Caki2 (cell line): ENCODE measurements at regions of chr17 and their contacts with region 1.

Region 1: DNA sequence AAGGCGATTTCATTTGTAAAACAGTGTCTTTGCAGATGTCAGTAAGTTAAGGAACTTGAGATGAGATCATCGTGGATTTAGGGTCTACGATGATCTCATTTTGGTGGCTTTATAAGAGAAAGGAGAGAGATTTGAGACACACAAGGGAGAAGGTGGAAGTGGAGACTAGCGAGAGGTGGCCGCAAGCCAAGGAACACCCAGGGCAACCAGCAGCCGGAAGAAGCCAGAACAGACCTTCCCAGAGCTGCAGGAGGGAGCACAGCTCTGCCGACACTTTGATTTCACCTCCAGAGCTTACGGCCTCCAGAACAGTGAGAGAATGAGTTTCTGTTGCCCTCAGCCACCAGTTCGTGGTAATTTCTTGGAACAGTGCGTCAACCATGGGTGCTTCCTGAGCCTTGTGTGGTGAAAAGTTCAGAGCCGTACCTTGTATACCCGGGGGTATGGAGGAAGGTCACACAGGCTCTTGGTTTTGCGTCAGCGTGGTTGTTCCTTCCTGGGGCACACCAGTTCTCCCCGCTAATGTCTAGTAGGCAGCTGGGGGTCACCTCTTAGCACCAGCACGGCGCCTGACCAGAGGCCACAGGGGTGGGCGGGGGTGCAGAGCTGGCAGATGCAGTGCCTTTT is 12.9 kb upstream of the SEC14L1 start:
- DNase-seq: no peak

Region 2: DNA sequence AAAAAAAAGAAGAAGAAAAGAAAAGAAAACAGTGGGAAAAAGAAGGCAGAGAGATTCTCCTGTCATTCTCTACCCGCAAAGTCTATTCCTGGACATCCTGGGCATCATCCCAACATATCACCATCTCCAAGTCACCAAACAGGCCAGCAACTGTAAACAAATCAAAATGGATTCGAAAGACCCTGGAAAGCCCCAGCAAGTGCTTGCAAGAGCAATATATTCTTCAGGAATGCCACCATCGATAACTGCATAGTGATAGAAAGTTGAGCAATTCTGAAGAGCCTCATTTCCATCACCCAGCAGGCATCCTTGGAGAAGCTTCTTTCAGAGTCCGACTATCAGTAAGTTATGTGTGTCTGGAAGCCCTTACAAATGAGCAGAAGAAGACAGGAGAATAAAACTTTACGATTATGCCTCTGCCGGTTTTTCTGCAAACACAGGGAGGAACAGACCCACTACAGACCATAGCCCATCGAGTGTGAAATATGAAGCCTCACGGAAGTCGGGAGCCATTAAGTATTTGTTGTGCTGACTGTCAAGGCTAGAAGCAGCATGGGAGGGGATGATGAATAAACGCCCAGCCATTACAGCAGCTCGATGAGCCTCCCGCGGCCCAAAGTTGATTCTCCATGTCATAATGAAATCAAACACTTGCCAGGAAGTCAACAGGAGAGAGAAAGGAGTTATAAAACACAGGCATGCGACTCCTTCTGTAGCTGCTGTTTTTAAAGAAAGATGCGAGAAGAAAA is 51.5 kb before region 1 on chr17:
- in situ Hi-C with region 1: loop called (anchors 10 kb)
- DNase-seq: no peak

Region 3: GRCh38 chr17:77245162-77245926 is 117.5 kb after region 1 on chr17:
- in situ Hi-C with region 1: no loop called
- DNase-seq: no peak